ENCODE measurements at regions of chr16 and their contacts with region 1.

Region 1: GRCh38 chr16:73000020-73000906 is 47.7 kb downstream of the ZFHX3 start:
- DNase-seq: no peak
- ATAC-seq: no peak
- H3K4me3 Mint-ChIP-seq: no peak overlapping the region
- H3K27ac Mint-ChIP-seq: no peak overlapping the region
- H3K4me1 Mint-ChIP-seq: no peaks in the 10 kb centered on the region
- H3K27me3 Mint-ChIP-seq: no peaks in the 10 kb centered on the region
- CTCF ChIP-seq: no peak

Region 2: DNA sequence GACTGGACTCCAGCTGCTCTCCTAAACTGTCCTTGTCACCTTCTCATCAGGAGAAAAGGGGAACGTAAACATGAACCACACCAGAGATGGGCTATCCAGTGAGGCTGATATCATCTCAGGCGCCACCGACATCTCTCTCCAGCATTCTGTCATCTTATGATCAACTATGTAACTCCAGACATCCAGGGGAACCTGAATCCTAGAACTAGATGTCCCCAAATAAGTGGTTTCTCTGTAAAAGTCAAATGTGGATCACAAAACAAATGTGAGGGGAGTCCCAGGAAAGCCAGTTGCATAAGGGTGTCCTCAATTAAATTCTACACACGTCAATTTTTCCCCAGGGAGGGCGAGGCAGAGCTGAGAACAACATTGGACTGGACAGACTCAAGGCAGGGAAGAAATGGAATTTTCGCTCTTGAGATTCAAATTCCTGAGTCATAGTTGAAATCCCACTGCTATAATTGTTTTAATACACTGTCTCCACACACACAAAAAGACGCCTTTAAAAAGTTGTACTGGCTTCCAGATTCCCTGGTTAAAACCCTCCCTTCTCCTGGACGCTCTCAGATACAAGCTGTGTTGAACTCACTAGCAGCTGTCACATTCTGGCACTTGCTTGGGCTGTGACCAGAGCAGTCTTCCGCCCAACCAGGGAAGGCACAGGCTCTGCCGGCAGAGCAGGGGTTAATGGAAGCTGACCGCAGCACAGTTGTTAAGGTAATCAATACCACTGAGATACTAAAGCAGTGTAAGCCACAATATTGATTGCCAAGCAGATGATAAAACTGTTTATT is 14.9 kb before region 1 on chr16:
- CTCF ChIA-PET with region 1: no interaction called
- POLR2A ChIA-PET with region 1: interaction called, 10 read pairs
- intact Hi-C with region 1: no loop called
- DNase-seq: no peak
- ATAC-seq: no peak
- H3K4me3 Mint-ChIP-seq: no peak overlapping the region
- H3K27ac Mint-ChIP-seq: no peak overlapping the region
- H3K4me1 Mint-ChIP-seq: peaks cover 2% of the 10 kb centered on the region
- H3K27me3 Mint-ChIP-seq: no peaks in the 10 kb centered on the region
- CTCF ChIP-seq: no peak

Measured in activated B cell treated with CpG ODN at 0.5 μM for 24 hours (primary cell).